HepG2 (cell line): ENCODE measurements at regions of chr21 and their contacts with region 1.

Region 1: GRCh38 chr21:34836103-34836932 is 167.5 kb downstream of the CLIC6 start:
- DNase-seq: peak; percentile 92
- ATAC-seq: peak; percentile 92
- H3K4me3 ChIP-seq: peak overlapping the region; percentile 19 to 45 (median 21)
- H3K27ac ChIP-seq: peak overlapping the region; percentile 92
- H3K4me1 ChIP-seq: peaks cover 54% of the 10 kb centered on the region
- H3K27me3 ChIP-seq: no peaks in the 10 kb centered on the region
- CTCF ChIP-seq: no peak
- EP300 ChIP-seq: peak; percentile 48 to 87; a peak in 2 of 4 replicates
- POLR2A ChIP-seq: peak in 1 of 2 experiments; percentile 37; a peak in 1 of 4 replicates
- RAD21 ChIP-seq: 0 out of 2 replicates have a peak, but pooled peaks have one; percentile 6

Region 2: GRCh38 chr21:34795175-34795547 is 41.2 kb before region 1 on chr21:
- CTCF ChIA-PET with region 1: no interaction called
- POLR2A ChIA-PET with region 1: interaction called, 28 read pairs
- in situ Hi-C with region 1: no loop called
- intact Hi-C with region 1: loop called (anchors 5 kb)
- DNase-seq: no peak
- ATAC-seq: no peak; the same call in 2 of the 3 replicates
- H3K4me3 ChIP-seq: peak overlapping the region in 1 of 3 experiments; percentile 4; a peak in 1 of 6 replicates
- H3K27ac ChIP-seq: peak overlapping the region; percentile 66
- H3K4me1 ChIP-seq: peaks cover 83% of the 10 kb centered on the region
- H3K27me3 ChIP-seq: no peaks in the 10 kb centered on the region
- CTCF ChIP-seq: 0 out of 2 replicates have a peak, but pooled peaks have one; percentile 11
- EP300 ChIP-seq: no peak
- POLR2A ChIP-seq: no peak
- RAD21 ChIP-seq: no peak

Region 3: GRCh38 chr21:34801519-34802132 is 34.7 kb before region 1 on chr21:
- CTCF ChIA-PET with region 1: no interaction called
- POLR2A ChIA-PET with region 1: interaction called, 28 read pairs
- in situ Hi-C with region 1: no loop called
- intact Hi-C with region 1: loop called (anchors 5 kb)
- DNase-seq: no peak
- ATAC-seq: peak; percentile 71
- H3K4me3 ChIP-seq: no peak overlapping the region
- H3K27ac ChIP-seq: peak overlapping the region; percentile 41
- H3K4me1 ChIP-seq: peaks cover 58% of the 10 kb centered on the region
- H3K27me3 ChIP-seq: no peaks in the 10 kb centered on the region
- CTCF ChIP-seq: peak; percentile 71
- EP300 ChIP-seq: no peak
- POLR2A ChIP-seq: no peak
- RAD21 ChIP-seq: no peak; the same call in 1 of the 2 replicates

Region 4: GRCh38 chr21:34812504-34813265 is 23.6 kb before region 1 on chr21:
- CTCF ChIA-PET with region 1: no interaction called
- POLR2A ChIA-PET with region 1: interaction called, 76 read pairs
- in situ Hi-C with region 1: no loop called
- intact Hi-C with region 1: no loop called
- DNase-seq: peak; percentile 78
- ATAC-seq: peak; percentile 62
- H3K4me3 ChIP-seq: no peak overlapping the region
- H3K27ac ChIP-seq: peak overlapping the region; percentile 37
- H3K4me1 ChIP-seq: peaks cover 75% of the 10 kb centered on the region
- H3K27me3 ChIP-seq: no peaks in the 10 kb centered on the region
- CTCF ChIP-seq: no peak
- EP300 ChIP-seq: no peak
- POLR2A ChIP-seq: no peak
- RAD21 ChIP-seq: no peak